ENCODE measurements at regions of chr4 and their contacts with region 1.

Region 1: DNA sequence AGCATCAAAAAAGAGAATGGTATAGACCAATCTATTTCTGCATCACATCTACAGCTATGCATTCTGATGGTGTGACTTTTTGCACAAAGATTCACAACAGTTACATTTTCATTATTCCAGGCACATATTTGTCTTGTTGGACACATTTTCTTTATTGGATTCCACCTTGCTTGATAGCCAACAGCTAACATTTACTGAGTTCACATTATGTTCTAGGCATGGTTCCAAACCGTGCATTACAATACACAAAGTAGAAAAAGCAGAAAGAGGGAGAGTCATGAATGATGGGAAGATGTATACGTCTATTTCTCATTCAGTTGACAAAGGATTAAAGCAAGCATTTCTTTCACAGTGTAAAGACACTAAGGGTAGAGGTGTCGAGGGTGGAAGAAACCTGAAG is 22.9 kb upstream of the CLGN start:
- DNase-seq: no peak
- H3K4me3 ChIP-seq: no peak overlapping the region
- CTCF ChIP-seq: no peak

Region 2: GRCh38 chr4:140485939-140486338 is 35.6 kb after region 1 on chr4:
- in situ Hi-C with region 1: loop called (anchors 5 kb)
- DNase-seq: no peak
- H3K4me3 ChIP-seq: no peak overlapping the region
- CTCF ChIP-seq: no peak

Measured in astrocyte of the cerebellum (primary cell).